ENCODE measurements at regions of chr10 and their contacts with region 1.

Region 1: DNA sequence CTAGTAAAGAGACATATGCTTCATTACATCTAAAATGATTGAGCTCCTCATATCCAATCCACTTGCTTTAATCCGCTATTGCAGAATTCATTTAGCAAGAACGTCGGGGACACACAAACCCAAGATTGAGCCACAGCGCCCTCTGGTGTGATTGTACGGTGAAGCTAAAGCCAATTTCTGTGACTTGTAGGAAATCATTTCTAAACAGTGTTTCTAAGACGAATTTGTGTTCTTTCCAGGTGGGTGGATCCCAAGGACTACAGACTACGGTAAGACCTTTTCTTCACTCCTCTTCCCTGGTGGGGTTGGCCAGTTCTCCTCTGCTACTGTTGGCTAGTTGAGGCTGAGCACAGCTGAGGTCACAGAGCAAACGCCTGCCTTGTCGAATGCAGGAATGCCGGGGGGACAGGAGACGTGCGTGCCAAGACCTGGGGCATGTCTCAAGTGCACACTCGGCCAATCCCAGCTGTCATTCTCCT is 5.2 kb downstream of the DMBT1 start:
- DNase-seq: peak; percentile 93
- H3K4me3 Mint-ChIP-seq: peak overlapping the region; percentile 68
- H3K27ac Mint-ChIP-seq: no peak overlapping the region
- H3K4me1 Mint-ChIP-seq: peaks cover 12% of the 10 kb centered on the region
- H3K27me3 Mint-ChIP-seq: no peaks in the 10 kb centered on the region
- CTCF ChIP-seq: peak; percentile 83

Region 2: DNA sequence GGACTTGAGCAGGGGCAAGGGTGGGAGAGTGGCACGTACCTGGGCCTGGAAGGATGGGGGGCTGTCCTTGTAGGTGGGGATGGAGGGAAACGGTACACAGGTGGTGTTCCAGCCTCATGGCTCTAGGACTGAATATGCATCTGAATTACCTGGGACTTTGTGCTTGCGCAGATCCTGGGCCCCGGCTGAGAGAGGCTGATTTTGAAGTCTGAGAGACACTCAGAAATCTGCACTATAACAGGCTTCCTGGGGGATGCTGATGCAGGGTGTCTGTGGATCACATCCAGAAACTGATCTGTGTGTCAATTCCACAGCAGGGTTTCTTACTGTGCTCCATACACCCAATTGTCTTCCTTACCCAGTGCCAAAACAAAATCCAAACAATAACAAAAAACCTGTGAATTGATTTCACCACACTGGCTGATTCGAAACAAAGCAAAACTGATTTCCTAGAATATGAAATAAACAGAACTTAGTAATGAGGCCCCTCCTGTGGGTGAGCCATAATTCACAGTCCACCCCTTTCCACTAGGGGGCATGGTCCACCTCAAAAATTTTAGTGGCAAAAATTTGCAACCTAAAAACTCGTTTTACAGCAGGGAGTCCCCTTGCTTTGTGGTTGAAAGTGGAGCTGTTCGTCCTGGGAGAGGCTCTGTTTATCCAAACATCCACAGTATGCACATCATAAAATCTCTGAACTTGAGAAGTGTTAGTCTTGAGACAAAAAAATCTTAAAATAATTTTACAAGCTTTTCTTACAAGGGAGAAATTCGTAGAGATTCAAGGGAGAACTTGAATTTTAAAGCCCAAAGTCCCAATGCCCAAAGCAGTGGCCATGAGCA is 223.3 kb before region 1 on chr10:
- CTCF ChIA-PET with region 1: interaction called, 7 read pairs
- POLR2A ChIA-PET with region 1: interaction called, 3 read pairs
- intact Hi-C with region 1: loop called (anchors 1 kb)
- DNase-seq: peak; percentile 72
- H3K4me3 Mint-ChIP-seq: no peak overlapping the region
- H3K27ac Mint-ChIP-seq: no peak overlapping the region
- H3K4me1 Mint-ChIP-seq: peaks cover 12% of the 10 kb centered on the region
- H3K27me3 Mint-ChIP-seq: no peaks in the 10 kb centered on the region
- CTCF ChIP-seq: peak; percentile 54

Region 3: DNA sequence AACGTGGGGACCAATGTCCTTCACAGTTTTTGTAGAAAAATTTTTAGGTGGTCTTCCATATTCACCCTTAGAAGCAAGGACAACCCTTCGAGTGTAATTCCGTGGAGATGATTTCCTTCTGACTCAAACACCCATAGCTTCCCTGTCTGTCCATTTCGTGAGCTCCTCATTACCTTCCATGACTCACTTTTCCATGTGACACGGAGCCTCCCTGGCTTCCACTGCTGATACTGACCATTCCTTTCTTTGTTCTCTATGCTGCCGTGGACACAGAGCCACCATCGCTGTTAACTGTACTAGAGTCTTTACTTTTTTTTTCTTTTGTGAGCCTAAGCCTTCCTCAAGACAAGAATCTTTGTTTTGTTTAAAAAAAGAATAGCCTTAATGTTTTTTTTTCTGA is 123.8 kb before region 1 on chr10:
- CTCF ChIA-PET with region 1: interaction called, 17 read pairs
- POLR2A ChIA-PET with region 1: interaction called, 9 read pairs
- intact Hi-C with region 1: no loop called
- DNase-seq: peak; percentile 74
- H3K4me3 Mint-ChIP-seq: peak overlapping the region; percentile 43
- H3K27ac Mint-ChIP-seq: peak overlapping the region; percentile 85
- H3K4me1 Mint-ChIP-seq: peaks cover 14% of the 10 kb centered on the region
- H3K27me3 Mint-ChIP-seq: no peaks in the 10 kb centered on the region
- CTCF ChIP-seq: no peak

Region 4: GRCh38 chr10:122504610-122504950 is 61.2 kb before region 1 on chr10:
- CTCF ChIA-PET with region 1: interaction called, 13 read pairs
- POLR2A ChIA-PET with region 1: interaction called, 4 read pairs
- intact Hi-C with region 1: no loop called
- DNase-seq: peak; percentile 94
- H3K4me3 Mint-ChIP-seq: peak overlapping the region; percentile 16
- H3K27ac Mint-ChIP-seq: no peak overlapping the region
- H3K4me1 Mint-ChIP-seq: peaks cover 25% of the 10 kb centered on the region
- H3K27me3 Mint-ChIP-seq: no peaks in the 10 kb centered on the region
- CTCF ChIP-seq: no peak

Region 5: DNA sequence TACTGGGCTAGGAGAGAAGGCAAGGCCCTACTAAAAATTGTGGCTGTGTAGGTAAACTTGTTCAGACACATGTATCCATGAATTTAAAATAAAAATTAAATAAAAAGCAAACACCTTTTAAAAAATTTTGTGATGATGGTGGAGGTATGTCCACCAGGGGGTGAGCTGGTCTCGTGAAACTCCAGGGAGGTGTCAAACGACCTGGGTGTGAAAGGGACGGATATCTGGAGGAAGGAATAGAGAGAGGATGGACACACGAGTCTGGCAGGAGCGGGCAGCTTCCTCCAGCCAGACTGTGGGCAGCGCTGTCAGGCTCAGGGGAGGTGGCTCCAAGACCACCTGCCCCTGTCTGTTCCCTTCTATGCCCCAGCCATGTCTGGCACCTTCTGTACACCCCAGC is 40.0 kb before region 1 on chr10:
- CTCF ChIA-PET with region 1: interaction called, 15 read pairs
- POLR2A ChIA-PET with region 1: interaction called, 7 read pairs
- intact Hi-C with region 1: loop called (anchors 1 kb)
- DNase-seq: peak; percentile 59
- H3K4me3 Mint-ChIP-seq: no peak overlapping the region
- H3K27ac Mint-ChIP-seq: no peak overlapping the region
- H3K4me1 Mint-ChIP-seq: peaks cover 3% of the 10 kb centered on the region
- H3K27me3 Mint-ChIP-seq: no peaks in the 10 kb centered on the region
- CTCF ChIP-seq: peak; percentile 16